Endothelial cell of umbilical vein (primary cell): ENCODE measurements at regions of chr17 and their contacts with region 1.

Region 1: DNA sequence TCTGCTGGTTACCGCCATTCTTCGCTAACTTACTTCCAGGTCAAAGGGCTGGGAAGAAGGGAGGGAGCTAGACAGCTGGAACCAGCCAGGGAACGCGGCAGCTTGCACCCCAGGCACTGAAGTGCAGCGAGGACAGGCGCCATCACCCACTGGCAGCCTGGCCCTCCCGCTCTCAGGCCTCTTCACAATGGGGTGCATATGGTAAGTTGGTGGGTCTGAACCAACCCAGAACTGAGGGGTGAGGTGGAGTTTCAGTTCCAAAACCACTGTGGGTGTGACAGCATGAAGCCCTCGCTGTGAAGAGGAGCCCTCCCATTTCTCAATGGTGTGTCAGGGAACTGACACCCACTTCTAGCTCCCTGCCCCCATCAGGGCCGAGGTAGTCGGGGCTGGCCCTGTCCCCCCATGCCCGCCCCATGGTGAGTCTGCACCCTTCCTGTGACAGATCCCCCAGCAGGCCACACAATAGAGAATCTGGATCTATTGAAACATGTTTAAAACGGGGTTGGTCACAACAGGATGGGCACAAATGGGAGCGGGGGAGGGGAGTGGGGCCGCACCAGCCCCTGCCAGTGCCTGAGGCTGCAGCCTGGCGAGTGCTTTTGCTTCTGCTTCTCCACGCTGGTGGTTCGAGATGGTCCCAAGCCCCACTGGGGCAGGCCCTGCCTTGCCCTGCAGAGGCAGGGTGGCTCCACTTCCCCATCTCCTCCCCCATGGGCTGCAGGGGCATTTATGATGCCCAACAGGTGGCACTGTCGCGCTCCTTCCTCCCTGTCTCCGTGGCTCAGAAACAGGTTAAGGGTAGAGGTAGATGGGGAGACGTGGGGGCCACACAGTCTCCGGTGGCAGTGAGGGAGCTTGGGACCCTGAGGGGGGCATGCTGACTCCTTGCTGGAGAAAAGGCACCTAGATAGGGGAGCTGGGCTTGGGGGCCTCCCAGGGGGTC is 2.3 kb downstream of the LIMD2 start:
- DNase-seq: peak; percentile 44
- H3K4me3 ChIP-seq: no peak overlapping the region
- H3K27ac ChIP-seq: no peak overlapping the region
- H3K4me1 ChIP-seq: peaks cover 20% of the 10 kb centered on the region
- H3K27me3 ChIP-seq: no peaks in the 10 kb centered on the region
- CTCF ChIP-seq: peak; percentile 41 to 61
- POLR2A ChIP-seq: peak; percentile 15

Region 2: DNA sequence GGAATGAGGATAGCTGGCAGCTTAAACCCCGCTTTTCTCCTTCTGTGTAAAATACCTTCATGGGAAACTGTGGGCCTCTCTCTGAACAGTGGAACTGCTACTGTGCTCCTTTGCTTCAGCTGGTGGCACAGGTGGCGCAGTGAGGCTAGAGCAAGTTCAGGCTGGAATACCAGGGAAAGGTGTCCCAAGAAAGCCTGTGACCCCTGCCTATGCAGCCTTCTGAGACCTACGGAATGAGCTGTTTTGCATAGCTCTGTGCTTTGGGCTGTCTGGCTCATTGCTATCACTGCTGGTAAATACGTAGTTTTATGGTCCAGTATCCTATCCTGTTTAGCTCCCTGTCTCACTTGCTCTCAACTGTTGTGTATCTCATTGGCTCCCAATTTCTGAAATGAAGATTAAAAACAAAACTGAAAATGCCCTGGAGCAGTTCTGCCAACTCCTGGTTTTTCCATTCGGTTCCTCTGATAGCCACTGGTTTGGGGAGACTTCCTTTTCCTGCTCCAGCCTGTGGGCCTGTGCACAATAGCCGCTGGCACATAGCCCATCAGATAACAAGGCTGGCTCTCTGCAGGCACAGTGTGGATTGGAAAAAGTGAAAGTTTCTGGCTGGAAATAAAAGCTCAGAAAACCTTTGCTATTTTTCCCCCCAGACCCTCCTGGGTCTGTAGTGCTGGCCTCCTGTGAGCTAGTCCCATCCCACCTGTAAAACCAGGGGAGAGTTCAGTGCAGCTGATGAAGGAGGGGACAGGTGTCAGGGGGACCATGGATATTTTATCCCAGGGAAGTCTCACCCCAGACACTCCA is 21.8 kb before region 1 on chr17:
- CTCF ChIA-PET with region 1: interaction called, 12 read pairs
- POLR2A ChIA-PET with region 1: interaction called, 3 read pairs
- dilution Hi-C with region 1: no loop called
- intact Hi-C with region 1: loop called (anchors 1 kb)
- DNase-seq: peak; percentile 99
- H3K4me3 ChIP-seq: peak overlapping the region in 2 of 3 experiments; percentile 3 to 61
- H3K27ac ChIP-seq: peak overlapping the region; percentile 91
- H3K4me1 ChIP-seq: peaks cover 51% of the 10 kb centered on the region
- H3K27me3 ChIP-seq: no peaks in the 10 kb centered on the region
- CTCF ChIP-seq: no peak
- POLR2A ChIP-seq: peak; percentile 43

Region 3: DNA sequence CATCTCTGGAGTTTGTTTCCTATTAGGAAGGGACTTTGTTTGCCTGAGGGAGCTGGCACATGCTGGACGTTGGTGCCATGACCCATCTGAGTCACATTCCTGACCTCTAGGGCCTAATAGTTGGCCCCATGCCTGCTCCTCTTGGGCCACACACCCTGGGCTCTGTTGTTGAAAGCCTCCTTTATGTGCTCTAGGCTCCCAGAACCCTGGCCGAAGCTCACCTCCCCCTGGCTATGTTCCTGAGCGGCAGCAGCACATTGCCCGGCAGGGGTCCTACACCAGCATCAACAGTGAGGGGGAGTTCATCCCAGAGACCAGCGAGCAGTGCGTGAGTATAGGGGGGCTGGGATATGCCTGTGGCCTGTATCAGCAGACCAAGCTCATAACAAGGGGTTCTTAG is 16.0 kb before region 1 on chr17:
- CTCF ChIA-PET with region 1: interaction called, 12 read pairs
- POLR2A ChIA-PET with region 1: interaction called, 3 read pairs
- dilution Hi-C with region 1: no loop called
- intact Hi-C with region 1: loop called (anchors 1 kb)
- DNase-seq: peak; percentile 58
- H3K4me3 ChIP-seq: no peak overlapping the region
- H3K27ac ChIP-seq: no peak overlapping the region
- H3K4me1 ChIP-seq: peaks cover 37% of the 10 kb centered on the region
- H3K27me3 ChIP-seq: no peaks in the 10 kb centered on the region
- CTCF ChIP-seq: no peak
- POLR2A ChIP-seq: no peak

Region 4: GRCh38 chr17:63741221-63742049 is 43.8 kb after region 1 on chr17 and contains the start of gene STRADA:
- CTCF ChIA-PET with region 1: interaction called, 3 read pairs
- POLR2A ChIA-PET with region 1: no interaction called
- dilution Hi-C with region 1: no loop called
- intact Hi-C with region 1: loop called (anchors 1 kb)
- DNase-seq: peak; percentile 99
- H3K4me3 ChIP-seq: peak within 1 kb of the TSS; percentile 72 to 98 (median 93)
- H3K27ac ChIP-seq: peak within 1 kb of the TSS; percentile 80
- H3K4me1 ChIP-seq: peaks cover 12% of the 10 kb centered on the region
- H3K27me3 ChIP-seq: no peaks in the 10 kb centered on the region
- CTCF ChIP-seq: no peak
- POLR2A ChIP-seq: peak; percentile 88
- total RNA-seq, gene STRADA: 47.0 and 49.6 TPM in 2 replicates

Region 5: GRCh38 chr17:63773381-63774140 is 75.9 kb after region 1 on chr17 and contains the start of gene CCDC47:
- CTCF ChIA-PET with region 1: no interaction called
- POLR2A ChIA-PET with region 1: no interaction called
- dilution Hi-C with region 1: no loop called
- intact Hi-C with region 1: loop called (anchors 1 kb)
- DNase-seq: peak; percentile 99
- H3K4me3 ChIP-seq: peak within 1 kb of the TSS; percentile 77 to 94 (median 94)
- H3K27ac ChIP-seq: peak within 1 kb of the TSS; percentile 78
- H3K4me1 ChIP-seq: peaks cover 15% of the 10 kb centered on the region
- H3K27me3 ChIP-seq: no peaks in the 10 kb centered on the region
- CTCF ChIP-seq: no peak
- POLR2A ChIP-seq: peak; percentile 89
- total RNA-seq, gene CCDC47: 73.9 and 76.5 TPM in 2 replicates

Region 6: DNA sequence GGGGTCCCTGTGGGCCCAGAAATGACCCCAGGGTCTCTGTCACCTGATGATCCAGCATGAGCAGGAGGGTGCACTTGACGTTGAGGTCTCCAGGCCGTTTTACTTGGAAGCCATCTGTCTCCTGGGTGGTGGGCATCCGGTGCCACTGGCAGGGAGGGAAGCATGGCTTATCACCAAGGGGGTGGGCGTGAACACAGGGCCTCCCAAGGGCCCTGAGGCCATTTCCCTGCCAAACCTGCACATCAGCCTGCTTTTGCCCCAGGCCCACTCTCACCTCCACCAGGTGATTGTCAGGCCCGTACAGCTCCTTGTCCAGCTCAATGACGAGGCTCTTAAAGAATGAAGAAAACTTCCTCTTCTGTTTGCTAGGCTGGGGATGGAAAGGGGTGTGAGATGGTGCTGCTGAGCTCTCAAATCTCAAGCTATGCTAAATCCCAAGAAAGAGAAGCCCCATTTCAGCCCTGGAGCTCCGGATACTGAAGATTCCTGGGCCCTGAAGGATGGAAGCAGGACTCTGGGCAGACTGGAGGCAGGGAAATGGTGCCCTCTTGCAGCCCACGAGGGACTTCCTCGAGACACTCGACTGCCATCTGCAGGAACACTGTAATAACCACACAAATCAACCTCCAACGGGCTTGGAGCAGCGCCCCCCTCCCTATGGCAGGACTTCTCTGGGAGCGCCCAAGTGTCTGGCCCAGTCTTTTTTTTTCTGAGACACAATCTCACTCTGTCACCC is 137.0 kb after region 1 on chr17:
- CTCF ChIA-PET with region 1: no interaction called
- POLR2A ChIA-PET with region 1: no interaction called
- dilution Hi-C with region 1: no loop called
- intact Hi-C with region 1: loop called (anchors 2 kb)
- DNase-seq: peak; percentile 83
- H3K4me3 ChIP-seq: no peak overlapping the region
- H3K27ac ChIP-seq: no peak overlapping the region
- H3K4me1 ChIP-seq: no peaks in the 10 kb centered on the region
- H3K27me3 ChIP-seq: no peaks in the 10 kb centered on the region
- CTCF ChIP-seq: peak; percentile 51 to 76
- POLR2A ChIP-seq: no peak